Motor neuron (in vitro differentiated cells): ENCODE measurements at regions of chr1 and their contacts with region 1.

Region 1: GRCh38 chr1:235971571-235972310 is 93.1 kb downstream of the NID1 start:
- ATAC-seq: peak; percentile 89 to 99 (median 98)
- H3K4me3 ChIP-seq: peak overlapping the region; percentile 1 to 25 (median 24)
- H3K27ac ChIP-seq: no peak overlapping the region
- H3K4me1 ChIP-seq: peaks cover 2 to 12% of the 10 kb centered on the region in 2 donors

Region 2: GRCh38 chr1:235504496-235505222 is 467.1 kb before region 1 on chr1:
- in situ Hi-C with region 1: loop called in 2 of 9 experiments (anchors 25 kb)
- ATAC-seq: peak; percentile 77 to 91 (median 87)
- H3K4me3 ChIP-seq: peak overlapping the region; percentile 59 to 86 (median 69)
- H3K27ac ChIP-seq: peak overlapping the region; percentile 90 to 94
- H3K4me1 ChIP-seq: peaks cover 0 to 9% of the 10 kb centered on the region in 2 donors

Region 3: DNA sequence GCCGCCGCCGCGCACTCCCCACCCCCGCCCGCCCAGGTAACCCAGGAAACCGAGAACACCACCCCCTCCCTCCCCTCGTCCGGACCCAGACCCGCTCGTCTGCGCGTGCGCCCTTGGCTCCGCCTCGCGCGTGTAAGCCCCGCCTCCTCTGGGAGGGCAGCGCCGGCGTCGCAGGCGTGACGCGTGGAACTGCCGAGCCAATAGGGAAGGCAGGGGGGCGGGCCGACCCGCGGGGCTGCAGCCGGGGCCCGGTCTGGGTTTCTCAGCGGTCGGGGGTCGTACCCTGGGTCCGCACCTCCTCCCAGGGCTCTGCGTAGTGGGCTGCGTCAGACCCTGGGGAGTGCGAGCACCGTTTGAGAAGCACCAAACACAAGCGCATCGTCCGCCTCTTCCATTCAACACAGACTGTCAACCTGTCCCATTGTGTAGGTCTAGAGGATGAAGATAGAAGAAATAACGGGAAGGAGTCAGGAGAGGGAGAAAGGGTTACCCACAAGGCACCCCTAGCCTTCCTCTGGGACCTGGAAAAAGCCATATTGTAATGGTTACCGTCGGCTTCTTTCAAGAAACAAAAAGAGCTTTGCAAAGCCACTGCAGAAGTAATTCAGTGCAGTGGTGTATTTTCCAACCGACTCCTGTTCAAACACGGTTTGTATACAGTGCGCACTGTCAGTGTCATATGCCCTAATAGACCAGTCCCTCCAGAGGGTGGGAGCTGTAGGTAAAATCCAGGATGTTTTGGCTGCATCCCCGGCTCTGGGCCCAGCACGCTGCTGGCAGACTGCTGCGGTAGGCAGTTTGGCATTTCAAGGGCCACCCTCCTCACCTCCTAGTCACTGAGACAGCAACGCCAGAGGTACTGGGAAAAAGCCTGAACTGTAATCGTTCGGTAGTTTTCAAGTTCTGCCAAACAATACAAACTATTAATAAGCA is 104.6 kb before region 1 on chr1:
- in situ Hi-C with region 1: loop called in 1 of 9 experiments (anchors 25 kb)
- ATAC-seq: peak; percentile 77 to 92 (median 90)
- H3K4me3 ChIP-seq: peak overlapping the region; percentile 69 to 85 (median 76)
- H3K27ac ChIP-seq: peak overlapping the region; percentile 86 to 88
- H3K4me1 ChIP-seq: peaks cover 17 to 18% of the 10 kb centered on the region in 2 donors